ENCODE measurements at regions of chr1 and their contacts with region 1.

Region 1: DNA sequence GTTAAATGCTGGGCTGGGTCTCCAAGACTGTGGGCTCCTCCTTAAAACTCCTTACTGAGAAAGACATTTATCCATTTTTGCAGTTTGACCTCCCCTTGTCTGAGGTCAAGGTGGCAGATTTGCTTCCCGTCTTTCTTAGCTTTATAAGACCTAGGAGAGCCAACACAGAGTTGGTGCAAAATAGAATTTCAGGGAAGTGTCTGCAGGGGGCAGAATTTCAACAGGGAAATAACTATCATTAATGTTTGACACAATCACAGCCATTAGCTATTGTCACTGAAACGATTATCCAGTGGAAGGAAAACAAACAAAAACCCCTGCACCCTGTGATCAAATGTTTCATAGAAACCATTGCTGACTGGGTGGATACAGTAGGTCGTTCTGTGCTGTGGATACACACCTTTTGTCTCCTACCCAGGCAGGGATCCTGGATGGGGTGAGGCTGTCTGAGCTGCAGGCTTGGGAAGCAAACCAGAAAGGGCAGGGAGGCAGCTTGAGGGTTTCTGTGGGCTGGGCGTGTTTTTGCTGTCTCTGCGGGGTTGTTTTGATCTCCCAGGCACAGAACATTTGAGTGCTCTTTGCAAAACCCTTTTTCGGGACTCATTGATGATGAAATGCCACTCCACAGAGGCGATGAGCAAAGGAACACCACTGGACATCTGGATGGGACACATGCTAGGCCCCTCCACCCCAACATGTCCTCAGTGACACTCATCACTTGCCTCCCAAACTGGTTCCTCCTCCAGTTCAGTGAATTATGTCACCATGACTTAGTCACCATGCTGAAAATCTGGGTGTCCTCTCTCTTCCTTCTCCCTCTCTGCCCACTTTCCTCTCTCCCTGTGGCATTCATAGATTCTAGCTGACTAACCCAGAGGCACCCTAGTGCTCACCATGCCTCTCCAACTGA is 94.2 kb upstream of the SERBP1 start:
- DNase-seq: no peak
- H3K4me3 ChIP-seq: no peak overlapping the region
- H3K4me3 Mint-ChIP-seq: no peak overlapping the region
- H3K27ac ChIP-seq: no peak overlapping the region
- H3K27ac Mint-ChIP-seq: peak overlapping the region in 1 of 7 donors; percentile 20
- H3K4me1 ChIP-seq: no peaks in the 10 kb centered on the region
- H3K4me1 Mint-ChIP-seq: no peaks in the 10 kb centered on the region
- H3K27me3 ChIP-seq: no peaks in the 10 kb centered on the region
- H3K27me3 Mint-ChIP-seq: peaks cover 10 to 14% of the 10 kb centered on the region in 2 donors

Region 2: DNA sequence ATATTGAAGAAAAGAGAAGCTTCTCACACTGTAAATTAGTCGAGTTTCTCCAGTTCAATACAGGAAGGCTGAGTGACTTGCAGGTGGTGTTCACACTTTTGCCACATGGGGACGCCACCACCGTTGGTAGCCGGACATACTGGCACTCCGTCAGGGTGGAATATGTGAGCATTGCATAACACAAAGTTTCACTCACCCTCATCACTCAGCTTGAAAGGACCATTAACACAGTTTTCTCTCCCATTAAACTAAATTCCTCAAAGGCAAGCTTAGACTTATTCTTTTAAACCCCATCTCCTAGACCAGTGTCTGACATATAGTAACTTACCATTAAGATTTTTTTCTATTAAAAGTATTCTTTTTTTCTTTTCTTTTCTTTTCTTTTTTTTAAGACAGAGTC is 11.1 kb after region 1 on chr1:
- CTCF ChIA-PET with region 1: interaction called, 10 read pairs
- POLR2A ChIA-PET with region 1: no interaction called
- intact Hi-C with region 1: no loop called
- DNase-seq: peak in 1 of 5 donors; percentile 6
- H3K4me3 ChIP-seq: no peak overlapping the region
- H3K4me3 Mint-ChIP-seq: no peak overlapping the region
- H3K27ac ChIP-seq: no peak overlapping the region
- H3K27ac Mint-ChIP-seq: no peak overlapping the region
- H3K4me1 ChIP-seq: no peaks in the 10 kb centered on the region
- H3K4me1 Mint-ChIP-seq: peaks cover 0 to 2% (median under 1%) of the 10 kb centered on the region in 4 donors
- H3K27me3 ChIP-seq: no peaks in the 10 kb centered on the region
- H3K27me3 Mint-ChIP-seq: peaks cover 0 to 5% of the 10 kb centered on the region in 2 donors

Region 3: GRCh38 chr1:67997746-67998145 is 473.3 kb after region 1 on chr1:
- CTCF ChIA-PET with region 1: no interaction called
- POLR2A ChIA-PET with region 1: no interaction called
- intact Hi-C with region 1: no loop called
- DNase-seq: no peak
- H3K4me3 ChIP-seq: no peak overlapping the region
- H3K4me3 Mint-ChIP-seq: no peak overlapping the region
- H3K27ac ChIP-seq: no peak overlapping the region
- H3K27ac Mint-ChIP-seq: no peak overlapping the region
- H3K4me1 ChIP-seq: no peaks in the 10 kb centered on the region
- H3K4me1 Mint-ChIP-seq: no peaks in the 10 kb centered on the region
- H3K27me3 ChIP-seq: no peaks in the 10 kb centered on the region
- H3K27me3 Mint-ChIP-seq: no peaks in the 10 kb centered on the region

Measured in CD4-positive, alpha-beta memory T cell (primary cell).